B cell (primary cell): ENCODE measurements at regions of chr12 and their contacts with region 1.

Region 1: GRCh38 chr12:104695453-104696148 is 238.9 kb downstream of the CHST11 start:
- DNase-seq: peak; percentile 72
- ATAC-seq: peak; percentile 73
- H3K4me3 ChIP-seq: no peak overlapping the region
- H3K4me3 Mint-ChIP-seq: peak overlapping the region; percentile 64
- H3K27ac ChIP-seq: peak overlapping the region; percentile 26 to 58
- H3K27ac Mint-ChIP-seq: peak overlapping the region; percentile 80
- H3K4me1 ChIP-seq: peaks cover 43 to 49% of the 10 kb centered on the region in 2 donors
- H3K4me1 Mint-ChIP-seq: peaks cover 75% of the 10 kb centered on the region
- H3K27me3 ChIP-seq: no peaks in the 10 kb centered on the region
- H3K27me3 Mint-ChIP-seq: no peaks in the 10 kb centered on the region
- CTCF ChIP-seq: no peak

Region 2: GRCh38 chr12:104478396-104479122 is 217.0 kb before region 1 on chr12:
- CTCF ChIA-PET with region 1: no interaction called
- POLR2A ChIA-PET with region 1: no interaction called
- intact Hi-C with region 1: no loop called
- DNase-seq: peak; percentile 81
- ATAC-seq: peak; percentile 84
- H3K4me3 ChIP-seq: peak overlapping the region; percentile 23 to 63 (median 45)
- H3K4me3 Mint-ChIP-seq: peak overlapping the region; percentile 95
- H3K27ac ChIP-seq: peak overlapping the region; percentile 62 to 92
- H3K27ac Mint-ChIP-seq: peak overlapping the region; percentile 95
- H3K4me1 ChIP-seq: peaks cover 71 to 83% of the 10 kb centered on the region in 2 donors
- H3K4me1 Mint-ChIP-seq: peaks cover 87% of the 10 kb centered on the region
- H3K27me3 ChIP-seq: no peaks in the 10 kb centered on the region
- H3K27me3 Mint-ChIP-seq: no peaks in the 10 kb centered on the region
- CTCF ChIP-seq: no peak

Region 3: DNA sequence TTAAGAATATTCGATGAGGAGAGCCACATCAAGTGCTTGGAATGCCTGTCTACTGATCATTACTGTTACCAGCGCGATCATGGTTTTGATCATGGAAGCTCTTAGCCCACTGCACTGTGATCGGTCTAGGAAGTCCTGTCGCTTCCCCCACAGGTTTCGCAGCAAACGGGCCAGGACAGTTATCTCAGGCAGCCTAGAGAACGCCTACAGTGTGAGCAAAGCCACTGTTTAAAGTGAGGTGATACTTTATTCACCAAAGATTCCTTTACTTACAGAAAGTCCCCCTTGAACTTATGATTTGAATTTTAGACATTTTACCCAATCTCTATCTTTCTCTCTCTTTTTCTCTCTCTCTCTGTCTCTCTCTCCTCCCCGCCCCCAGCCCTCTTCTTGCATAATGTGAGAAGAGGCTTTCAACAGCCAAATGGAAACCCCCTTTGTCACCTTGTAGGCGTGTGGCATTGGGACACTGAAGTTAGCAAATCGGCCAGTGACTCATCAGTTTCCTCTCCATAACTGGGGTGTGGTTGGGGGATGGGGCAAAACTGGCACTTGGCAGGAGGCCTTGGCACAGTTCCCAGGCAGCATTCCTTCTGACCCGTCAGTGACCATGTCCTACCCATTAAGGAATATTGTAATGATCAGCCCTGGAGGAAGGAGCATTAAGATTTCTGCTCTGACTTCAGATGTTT is 24.0 kb before region 1 on chr12:
- CTCF ChIA-PET with region 1: no interaction called
- POLR2A ChIA-PET with region 1: interaction called, 10 read pairs
- intact Hi-C with region 1: loop called (anchors 2 kb)
- DNase-seq: peak; percentile 75
- ATAC-seq: peak; percentile 73
- H3K4me3 ChIP-seq: no peak overlapping the region
- H3K4me3 Mint-ChIP-seq: peak overlapping the region; percentile 61
- H3K27ac ChIP-seq: peak overlapping the region in 1 of 2 donors; percentile 48
- H3K27ac Mint-ChIP-seq: peak overlapping the region; percentile 71
- H3K4me1 ChIP-seq: peaks cover 39 to 62% of the 10 kb centered on the region in 2 donors
- H3K4me1 Mint-ChIP-seq: peaks cover 79% of the 10 kb centered on the region
- H3K27me3 ChIP-seq: no peaks in the 10 kb centered on the region
- H3K27me3 Mint-ChIP-seq: no peaks in the 10 kb centered on the region
- CTCF ChIP-seq: no peak

Region 4: GRCh38 chr12:104714369-104714768 is 18.8 kb after region 1 on chr12:
- CTCF ChIA-PET with region 1: no interaction called
- POLR2A ChIA-PET with region 1: no interaction called
- intact Hi-C with region 1: loop called (anchors 2 kb)
- DNase-seq: no peak
- ATAC-seq: no peak
- H3K4me3 ChIP-seq: no peak overlapping the region
- H3K4me3 Mint-ChIP-seq: no peak overlapping the region
- H3K27ac ChIP-seq: no peak overlapping the region
- H3K27ac Mint-ChIP-seq: no peak overlapping the region
- H3K4me1 ChIP-seq: peaks cover 3 to 19% of the 10 kb centered on the region in 2 donors
- H3K4me1 Mint-ChIP-seq: peaks cover 42% of the 10 kb centered on the region
- H3K27me3 ChIP-seq: no peaks in the 10 kb centered on the region
- H3K27me3 Mint-ChIP-seq: no peaks in the 10 kb centered on the region
- CTCF ChIP-seq: no peak

Region 5: DNA sequence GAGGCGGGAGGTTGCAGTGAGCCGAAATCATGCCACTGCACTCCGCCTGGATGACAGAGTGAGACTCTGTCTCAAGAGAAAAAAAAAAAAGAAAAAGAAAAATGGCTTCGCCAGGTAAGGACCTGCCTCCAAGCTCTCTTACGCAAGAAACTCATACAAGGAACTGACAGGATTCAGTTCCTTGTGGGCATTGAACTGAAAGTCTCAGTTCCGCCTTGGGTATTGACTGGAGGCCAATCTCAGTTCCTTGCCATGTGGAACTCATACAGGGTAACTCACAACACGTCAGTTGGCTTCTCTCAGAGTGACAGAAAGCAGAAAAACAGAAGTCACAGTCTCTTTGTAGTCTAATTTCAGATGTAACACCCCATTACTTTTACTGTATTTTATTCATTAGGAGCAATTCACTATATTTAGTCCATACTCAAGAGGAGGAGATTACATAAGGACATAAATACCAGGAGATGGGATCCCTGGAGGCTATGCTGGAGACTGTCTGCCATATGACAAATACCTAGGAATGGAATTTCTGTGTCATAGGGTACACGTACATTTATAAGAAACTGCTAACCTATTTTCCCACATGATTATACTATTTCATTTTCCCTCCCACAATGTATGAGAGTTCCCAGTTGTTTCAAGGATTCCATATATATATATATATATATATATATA is 279.2 kb after region 1 on chr12:
- CTCF ChIA-PET with region 1: no interaction called
- POLR2A ChIA-PET with region 1: no interaction called
- intact Hi-C with region 1: no loop called
- DNase-seq: peak; percentile 92
- ATAC-seq: peak; percentile 99
- H3K4me3 ChIP-seq: peak overlapping the region in 1 of 5 experiments; percentile 7
- H3K4me3 Mint-ChIP-seq: peak overlapping the region; percentile 69
- H3K27ac ChIP-seq: peak overlapping the region; percentile 71 to 76
- H3K27ac Mint-ChIP-seq: peak overlapping the region; percentile 76
- H3K4me1 ChIP-seq: peaks cover 24 to 32% of the 10 kb centered on the region in 2 donors
- H3K4me1 Mint-ChIP-seq: peaks cover 30% of the 10 kb centered on the region
- H3K27me3 ChIP-seq: no peaks in the 10 kb centered on the region
- H3K27me3 Mint-ChIP-seq: no peaks in the 10 kb centered on the region
- CTCF ChIP-seq: no peak